WTC11 (cell line): ENCODE measurements at regions of chr21 and their contacts with region 1.

Region 1: DNA sequence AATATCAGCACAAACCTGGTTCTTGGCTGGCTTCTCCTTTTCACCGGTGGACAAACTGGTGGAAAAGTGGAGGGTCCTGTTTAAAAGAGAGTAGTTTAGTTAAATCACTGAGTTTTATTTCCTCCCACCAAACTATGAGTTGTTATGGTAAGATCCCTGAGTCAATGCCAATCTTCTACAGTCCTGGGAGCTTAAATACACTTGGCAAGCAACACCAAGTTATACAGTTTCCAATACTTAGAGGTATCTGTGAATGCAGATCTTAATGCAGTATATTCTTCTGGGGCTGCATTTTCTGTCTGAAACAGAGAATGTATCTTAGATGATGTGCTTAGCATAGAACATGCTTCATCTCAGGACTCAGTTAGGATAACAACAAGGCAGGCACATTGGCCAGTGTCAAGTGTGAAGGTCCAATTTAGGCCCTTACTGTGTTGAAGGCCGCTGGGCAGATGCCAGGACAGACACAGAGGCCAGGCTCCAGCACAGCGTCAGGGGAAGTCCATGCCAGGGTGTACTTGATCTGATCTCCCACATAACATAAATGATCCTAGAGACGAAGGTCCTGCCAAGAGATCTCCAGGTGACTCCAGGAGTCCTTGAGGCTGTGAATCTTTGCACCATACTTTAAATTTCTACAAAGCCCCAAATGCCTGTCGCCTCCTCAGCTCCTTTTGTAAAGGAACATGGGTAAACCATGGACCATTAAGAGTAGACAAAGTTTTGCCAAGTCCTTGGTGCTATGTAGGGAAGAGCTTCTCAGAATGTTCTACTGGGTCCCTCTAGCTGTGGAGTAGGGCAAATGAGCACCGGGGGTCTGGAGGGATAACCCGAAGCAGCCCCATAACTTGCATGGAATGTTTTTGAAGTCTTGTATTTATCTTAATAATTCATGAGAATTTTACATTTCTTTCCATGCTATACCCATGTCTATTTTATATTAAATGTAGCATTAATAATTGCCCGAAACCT is 76.8 kb downstream of the KCNJ15 start:
- DNase-seq: no peak
- ATAC-seq: peak; percentile 82
- H3K4me3 Mint-ChIP-seq: no peak overlapping the region
- H3K27ac Mint-ChIP-seq: no peak overlapping the region
- H3K4me1 Mint-ChIP-seq: peaks cover 5% of the 10 kb centered on the region; the same call in 1 of the 2 replicates
- H3K27me3 Mint-ChIP-seq: no peaks in the 10 kb centered on the region
- CTCF ChIP-seq: no peak

Region 2: DNA sequence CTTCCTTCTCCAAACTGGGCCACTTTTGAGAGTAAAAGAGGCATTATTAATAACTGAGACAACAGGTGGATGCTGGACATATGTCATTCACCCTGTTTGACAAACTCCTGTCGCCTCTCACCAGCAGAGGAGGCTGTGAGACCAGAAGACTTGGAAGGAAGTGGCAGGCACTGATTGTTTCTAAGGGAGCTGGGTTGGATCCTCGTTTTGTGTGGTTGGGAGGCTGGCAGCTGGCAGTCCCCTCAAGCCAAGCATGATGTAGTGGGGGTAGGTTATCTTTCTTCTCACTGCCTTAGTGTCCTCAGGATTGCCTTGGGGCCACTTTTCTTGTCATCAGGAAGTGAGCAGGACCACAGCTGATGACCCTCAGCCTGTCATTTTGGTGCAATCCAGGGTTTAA is 163.3 kb before region 1 on chr21:
- CTCF ChIA-PET with region 1: interaction called, 19 read pairs
- POLR2A ChIA-PET with region 1: interaction called, 3 read pairs
- DNase-seq: peak; percentile 44
- ATAC-seq: peak; percentile 31
- H3K4me3 Mint-ChIP-seq: no peak overlapping the region
- H3K27ac Mint-ChIP-seq: no peak overlapping the region
- H3K4me1 Mint-ChIP-seq: peaks cover 35% of the 10 kb centered on the region
- H3K27me3 Mint-ChIP-seq: no peaks in the 10 kb centered on the region
- CTCF ChIP-seq: no peak; the same call in 1 of the 2 replicates

Region 3: DNA sequence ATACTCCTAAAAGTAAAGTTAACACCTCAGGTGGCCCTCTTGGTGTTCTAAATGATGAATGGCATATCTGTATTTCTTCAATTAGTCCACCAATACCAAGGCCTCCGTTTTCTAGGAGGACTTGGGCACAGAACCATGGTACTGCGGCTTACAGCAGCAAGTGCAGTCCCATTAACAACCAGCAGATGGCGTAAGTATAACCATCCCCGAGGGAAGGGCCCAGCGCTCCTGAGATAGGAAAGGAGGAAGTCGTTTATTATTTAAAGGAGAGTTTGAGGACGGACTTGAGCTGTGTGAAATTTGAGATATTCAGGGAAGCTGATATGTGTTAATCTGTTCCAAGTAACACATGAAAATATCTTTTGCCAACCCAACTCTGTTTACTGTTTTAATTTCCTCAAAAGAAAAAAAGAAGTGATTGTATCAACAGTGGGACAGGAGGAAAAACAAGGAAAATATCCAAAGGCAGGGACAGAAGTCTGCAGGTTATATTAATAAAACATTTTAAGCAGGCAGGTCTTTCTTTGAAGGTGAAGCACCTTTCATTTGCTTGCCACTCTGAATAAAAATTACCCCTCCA is 114.4 kb before region 1 on chr21:
- CTCF ChIA-PET with region 1: interaction called, 21 read pairs
- POLR2A ChIA-PET with region 1: no interaction called
- DNase-seq: peak; percentile 76
- ATAC-seq: peak; percentile 93
- H3K4me3 Mint-ChIP-seq: no peak overlapping the region
- H3K27ac Mint-ChIP-seq: no peak overlapping the region
- H3K4me1 Mint-ChIP-seq: peaks cover 6% of the 10 kb centered on the region
- H3K27me3 Mint-ChIP-seq: peaks cover 14% of the 10 kb centered on the region
- CTCF ChIP-seq: peak; percentile 91